B cell (primary cell): ENCODE measurements at regions of chr3 and their contacts with region 1.

Region 1: DNA sequence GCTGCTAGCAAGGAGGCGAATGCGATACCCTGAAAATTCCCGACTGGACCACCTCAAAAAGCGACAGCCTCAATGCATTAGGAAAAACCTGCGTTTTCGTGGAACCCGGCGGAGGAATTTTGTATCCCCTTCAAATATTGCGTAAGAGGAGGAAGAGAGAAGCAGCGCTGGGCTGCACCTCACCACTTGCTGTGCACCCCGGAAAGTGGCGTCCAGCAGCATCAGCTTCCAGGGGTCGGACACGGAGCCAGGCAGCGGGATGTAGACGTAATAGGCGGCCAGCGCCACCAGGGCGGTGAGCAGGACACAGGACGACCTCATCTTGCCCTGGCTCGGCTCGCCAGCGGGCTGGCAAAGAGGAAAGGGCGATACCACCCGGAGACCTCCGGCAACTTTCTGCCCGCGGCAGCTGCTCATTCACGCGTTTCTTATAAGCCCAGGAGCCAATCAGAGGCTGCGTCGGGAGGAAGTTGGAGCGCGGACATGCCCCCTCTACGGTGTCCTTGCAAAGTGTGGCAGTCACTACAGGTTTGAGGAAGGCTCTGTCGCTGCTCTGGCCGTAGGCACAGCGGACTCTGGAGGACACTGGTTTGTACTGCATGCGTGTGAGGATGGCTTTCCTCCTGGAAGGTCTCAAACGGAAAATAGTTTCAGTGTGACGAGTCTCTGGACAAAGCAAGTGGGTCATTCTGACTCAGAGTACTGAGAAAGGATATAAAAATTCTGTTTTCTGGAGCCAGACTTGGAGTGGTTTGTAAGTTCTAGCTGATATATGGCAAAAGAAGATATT is at the start of gene NCEH1:
- DNase-seq: peak; percentile 87
- ATAC-seq: peak; percentile 99
- H3K4me3 ChIP-seq: peak within 1 kb of the TSS; percentile 86 to 98 (median 94)
- H3K4me3 Mint-ChIP-seq: peak within 1 kb of the TSS; percentile 98
- H3K27ac ChIP-seq: peak within 1 kb of the TSS; percentile 28 to 38
- H3K27ac Mint-ChIP-seq: peak within 1 kb of the TSS; percentile 89
- H3K4me1 ChIP-seq: peaks cover 15 to 23% of the 10 kb centered on the region in 2 donors
- H3K4me1 Mint-ChIP-seq: peaks cover 30% of the 10 kb centered on the region
- H3K27me3 ChIP-seq: peaks cover 0 to 4% (median 0%) of the 10 kb centered on the region in 4 experiments
- H3K27me3 Mint-ChIP-seq: no peaks in the 10 kb centered on the region
- CTCF ChIP-seq: peak; percentile 79
- total RNA-seq, gene NCEH1: 7.7 and 8.6 TPM in 2 replicates

Region 2: GRCh38 chr3:172437713-172438112 is 273.1 kb before region 1 on chr3:
- CTCF ChIA-PET with region 1: no interaction called
- POLR2A ChIA-PET with region 1: no interaction called
- intact Hi-C with region 1: no loop called
- DNase-seq: no peak
- ATAC-seq: no peak
- H3K4me3 ChIP-seq: no peak overlapping the region
- H3K4me3 Mint-ChIP-seq: no peak overlapping the region
- H3K27ac ChIP-seq: no peak overlapping the region
- H3K27ac Mint-ChIP-seq: no peak overlapping the region
- H3K4me1 ChIP-seq: no peaks in the 10 kb centered on the region
- H3K4me1 Mint-ChIP-seq: no peaks in the 10 kb centered on the region
- H3K27me3 ChIP-seq: peaks cover 0 to 4% (median 0%) of the 10 kb centered on the region in 4 experiments
- H3K27me3 Mint-ChIP-seq: peaks cover 21% of the 10 kb centered on the region
- CTCF ChIP-seq: no peak

Region 3: DNA sequence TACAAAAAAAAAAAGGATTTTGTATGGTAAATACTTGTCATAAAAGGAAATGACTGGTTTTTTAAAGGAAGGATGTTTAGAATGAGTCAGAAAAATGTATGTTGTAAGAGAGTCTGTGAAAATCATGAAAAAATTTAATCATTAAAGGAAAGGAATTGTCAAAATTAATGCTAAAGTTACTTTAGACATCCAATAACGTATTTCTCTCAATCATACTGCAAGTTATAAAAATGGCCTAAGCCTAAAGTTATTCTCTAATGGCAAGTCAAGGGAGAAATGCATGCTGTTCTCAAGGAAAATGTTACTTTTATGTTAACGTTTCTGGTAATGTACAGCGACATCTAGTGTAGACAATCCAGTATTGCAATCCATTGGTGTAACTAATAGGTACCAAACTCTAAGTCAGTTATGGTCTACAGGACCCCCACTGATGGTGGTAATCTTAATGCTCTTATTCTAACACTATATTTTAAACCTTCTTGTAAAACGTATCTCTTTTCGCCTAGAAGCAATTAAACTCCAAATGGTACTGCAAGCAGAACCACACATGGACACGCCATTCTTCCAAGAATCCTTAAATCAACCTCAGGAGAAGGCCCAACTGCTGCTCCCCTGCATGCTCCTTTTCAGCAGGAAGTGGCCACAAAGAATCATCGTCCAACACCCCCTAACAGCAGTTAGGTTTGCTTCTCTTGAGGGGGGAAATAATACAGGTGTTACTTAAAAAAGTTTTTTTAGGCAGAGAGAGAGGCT is 35.2 kb before region 1 on chr3:
- CTCF ChIA-PET with region 1: interaction called, 5 read pairs
- POLR2A ChIA-PET with region 1: no interaction called
- intact Hi-C with region 1: loop called (anchors 2 kb)
- DNase-seq: peak; percentile 61
- ATAC-seq: peak; percentile 51
- H3K4me3 ChIP-seq: no peak overlapping the region
- H3K4me3 Mint-ChIP-seq: no peak overlapping the region
- H3K27ac ChIP-seq: no peak overlapping the region
- H3K27ac Mint-ChIP-seq: no peak overlapping the region
- H3K4me1 ChIP-seq: no peaks in the 10 kb centered on the region
- H3K4me1 Mint-ChIP-seq: no peaks in the 10 kb centered on the region
- H3K27me3 ChIP-seq: no peaks in the 10 kb centered on the region
- H3K27me3 Mint-ChIP-seq: no peaks in the 10 kb centered on the region
- CTCF ChIP-seq: peak; percentile 95

Region 4: GRCh38 chr3:172692751-172693338 is 18.0 kb before region 1 on chr3:
- CTCF ChIA-PET with region 1: no interaction called
- POLR2A ChIA-PET with region 1: no interaction called
- intact Hi-C with region 1: no loop called
- DNase-seq: no peak
- ATAC-seq: peak; percentile 28
- H3K4me3 ChIP-seq: no peak overlapping the region
- H3K4me3 Mint-ChIP-seq: no peak overlapping the region
- H3K27ac ChIP-seq: no peak overlapping the region
- H3K27ac Mint-ChIP-seq: no peak overlapping the region
- H3K4me1 ChIP-seq: peaks cover 8 to 10% of the 10 kb centered on the region in 2 donors
- H3K4me1 Mint-ChIP-seq: peaks cover 17% of the 10 kb centered on the region
- H3K27me3 ChIP-seq: no peaks in the 10 kb centered on the region
- H3K27me3 Mint-ChIP-seq: no peaks in the 10 kb centered on the region
- CTCF ChIP-seq: no peak

Region 5: GRCh38 chr3:172726382-172726781 is 15.5 kb after region 1 on chr3:
- CTCF ChIA-PET with region 1: no interaction called
- POLR2A ChIA-PET with region 1: no interaction called
- intact Hi-C with region 1: no loop called
- DNase-seq: no peak
- ATAC-seq: no peak
- H3K4me3 ChIP-seq: no peak overlapping the region
- H3K4me3 Mint-ChIP-seq: no peak overlapping the region
- H3K27ac ChIP-seq: no peak overlapping the region
- H3K27ac Mint-ChIP-seq: no peak overlapping the region
- H3K4me1 ChIP-seq: no peaks in the 10 kb centered on the region
- H3K4me1 Mint-ChIP-seq: peaks cover 3% of the 10 kb centered on the region
- H3K27me3 ChIP-seq: peaks cover 0 to 3% (median 0%) of the 10 kb centered on the region in 4 experiments
- H3K27me3 Mint-ChIP-seq: peaks cover 26% of the 10 kb centered on the region
- CTCF ChIP-seq: no peak